ENCODE measurements at regions of chr19 and their contacts with region 1.

Region 1: DNA sequence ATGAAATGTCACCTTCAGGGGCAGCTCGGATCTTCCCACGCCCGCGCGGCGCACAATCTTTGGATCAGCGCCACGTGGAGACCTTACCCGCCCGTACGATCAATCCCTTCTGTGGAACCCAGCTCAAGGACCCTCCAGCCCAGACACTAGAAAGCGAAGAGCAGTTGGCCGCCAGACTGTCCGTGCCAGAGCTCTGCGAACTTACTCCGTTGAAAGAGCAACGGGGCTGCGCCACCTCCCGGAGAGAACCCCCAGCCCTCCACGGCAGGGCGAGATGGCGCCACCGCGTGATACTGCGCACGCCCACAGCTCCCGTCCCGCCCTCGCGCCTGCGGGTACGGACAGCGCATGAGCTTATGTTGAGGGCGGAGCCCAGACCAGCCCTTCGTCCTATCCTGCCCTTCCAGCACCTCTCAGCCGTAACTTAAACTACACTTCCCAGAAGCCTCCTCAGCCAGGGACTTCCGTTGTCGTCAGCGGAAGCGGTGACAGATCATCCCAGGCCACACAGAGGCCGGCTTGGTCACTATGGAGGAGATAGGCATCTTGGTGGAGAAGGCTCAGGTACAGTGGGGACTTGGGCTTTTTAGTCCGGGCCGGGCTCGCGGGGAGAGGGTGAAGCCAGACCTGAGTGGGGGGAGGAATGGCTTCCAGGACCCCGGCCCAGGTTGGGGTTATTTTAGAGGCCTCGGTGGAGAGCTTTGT is at the start of gene PSMC4:
- DNase-seq: peak; percentile 97
- ATAC-seq: peak; percentile 100
- H3K4me3 Mint-ChIP-seq: peak within 1 kb of the TSS; percentile 97
- H3K27ac Mint-ChIP-seq: peak within 1 kb of the TSS; percentile 96
- H3K4me1 Mint-ChIP-seq: peaks cover 25% of the 10 kb centered on the region
- H3K27me3 Mint-ChIP-seq: no peaks in the 10 kb centered on the region
- CTCF ChIP-seq: no peak
- total RNA-seq, gene PSMC4: 96.7 to 105 TPM (median 97.2 TPM) in 3 replicates

Region 2: GRCh38 chr19:39878398-39878797 is 92.4 kb before region 1 on chr19:
- CTCF ChIA-PET with region 1: interaction called, 23 read pairs
- POLR2A ChIA-PET with region 1: no interaction called
- DNase-seq: no peak
- ATAC-seq: no peak
- H3K4me3 Mint-ChIP-seq: no peak overlapping the region
- H3K27ac Mint-ChIP-seq: no peak overlapping the region
- H3K4me1 Mint-ChIP-seq: no peaks in the 10 kb centered on the region
- H3K27me3 Mint-ChIP-seq: no peaks in the 10 kb centered on the region
- CTCF ChIP-seq: no peak

Region 3: GRCh38 chr19:39889872-39890545 is 80.8 kb before region 1 on chr19:
- CTCF ChIA-PET with region 1: interaction called, 4 read pairs
- POLR2A ChIA-PET with region 1: interaction called, 10 read pairs
- DNase-seq: no peak
- ATAC-seq: no peak
- H3K4me3 Mint-ChIP-seq: no peak overlapping the region
- H3K27ac Mint-ChIP-seq: no peak overlapping the region
- H3K4me1 Mint-ChIP-seq: peaks cover 5% of the 10 kb centered on the region
- H3K27me3 Mint-ChIP-seq: peaks cover 5% of the 10 kb centered on the region; the same call in 1 of the 2 replicates
- CTCF ChIP-seq: no peak

Region 4: GRCh38 chr19:39941615-39942365 is 29.0 kb before region 1 on chr19:
- CTCF ChIA-PET with region 1: no interaction called
- POLR2A ChIA-PET with region 1: no interaction called
- DNase-seq: no peak
- ATAC-seq: no peak
- H3K4me3 Mint-ChIP-seq: no peak overlapping the region
- H3K27ac Mint-ChIP-seq: no peak overlapping the region
- H3K4me1 Mint-ChIP-seq: 0 out of 2 replicates have a peak, but pooled peaks cover 12% of the 10 kb centered on the region
- H3K27me3 Mint-ChIP-seq: no peaks in the 10 kb centered on the region
- CTCF ChIP-seq: no peak

Measured in WTC11 (cell line).